Aorta (tissue), 5 donors: ENCODE measurements at regions of chr19 and their contacts with region 1.

Region 1: GRCh38 chr19:19145684-19146608 is 7.7 kb upstream of the TMEM161A start:
- DNase-seq: peak; percentile 83 to 95
- ATAC-seq: peak; percentile 90
- H3K4me3 ChIP-seq: no peak overlapping the region
- H3K27ac ChIP-seq: no peak overlapping the region
- H3K4me1 ChIP-seq: no peaks in the 10 kb centered on the region
- H3K27me3 ChIP-seq: no peaks in the 10 kb centered on the region

Region 2: GRCh38 chr19:19170053-19170872 is 24.3 kb after region 1 on chr19 and contains the start of gene MEF2B:
- intact Hi-C with region 1: loop called in 1 of 2 experiments (anchors 2 kb)
- DNase-seq: peak; percentile 77 to 90
- ATAC-seq: peak; percentile 84
- H3K4me3 ChIP-seq: no peak within 1 kb of the TSS
- H3K27ac ChIP-seq: no peak within 1 kb of the TSS
- H3K4me1 ChIP-seq: no peaks in the 10 kb centered on the region
- H3K27me3 ChIP-seq: no peaks in the 10 kb centered on the region
- total RNA-seq, gene MEF2B: 1.6 to 2.4 TPM

Region 3: GRCh38 chr19:19342756-19343322 is 196.9 kb after region 1 on chr19:
- intact Hi-C with region 1: loop called in 1 of 2 experiments (anchors 5 kb)
- DNase-seq: peak in 1 of 2 donors; percentile 85
- ATAC-seq: peak; percentile 67
- H3K4me3 ChIP-seq: no peak overlapping the region
- H3K27ac ChIP-seq: no peak overlapping the region
- H3K4me1 ChIP-seq: no peaks in the 10 kb centered on the region
- H3K27me3 ChIP-seq: no peaks in the 10 kb centered on the region